Breast epithelium (tissue), 4 donors: ENCODE measurements at regions of chr5 and their contacts with region 1.

Region 1: GRCh38 chr5:111954516-111955395 is 197.8 kb upstream of the NREP start:
- DNase-seq: no peak
- H3K4me3 ChIP-seq: no peak overlapping the region
- H3K27ac ChIP-seq: no peak overlapping the region
- H3K4me1 ChIP-seq: no peaks in the 10 kb centered on the region
- H3K27me3 ChIP-seq: no peaks in the 10 kb centered on the region
- CTCF ChIP-seq: no peak
- POLR2A ChIP-seq: no peak

Region 2: GRCh38 chr5:111528056-111528455 is 426.7 kb before region 1 on chr5:
- intact Hi-C with region 1: no loop called
- DNase-seq: no peak
- H3K4me3 ChIP-seq: no peak overlapping the region
- H3K27ac ChIP-seq: no peak overlapping the region
- H3K4me1 ChIP-seq: no peaks in the 10 kb centered on the region
- H3K27me3 ChIP-seq: no peaks in the 10 kb centered on the region
- CTCF ChIP-seq: no peak
- POLR2A ChIP-seq: no peak

Region 3: DNA sequence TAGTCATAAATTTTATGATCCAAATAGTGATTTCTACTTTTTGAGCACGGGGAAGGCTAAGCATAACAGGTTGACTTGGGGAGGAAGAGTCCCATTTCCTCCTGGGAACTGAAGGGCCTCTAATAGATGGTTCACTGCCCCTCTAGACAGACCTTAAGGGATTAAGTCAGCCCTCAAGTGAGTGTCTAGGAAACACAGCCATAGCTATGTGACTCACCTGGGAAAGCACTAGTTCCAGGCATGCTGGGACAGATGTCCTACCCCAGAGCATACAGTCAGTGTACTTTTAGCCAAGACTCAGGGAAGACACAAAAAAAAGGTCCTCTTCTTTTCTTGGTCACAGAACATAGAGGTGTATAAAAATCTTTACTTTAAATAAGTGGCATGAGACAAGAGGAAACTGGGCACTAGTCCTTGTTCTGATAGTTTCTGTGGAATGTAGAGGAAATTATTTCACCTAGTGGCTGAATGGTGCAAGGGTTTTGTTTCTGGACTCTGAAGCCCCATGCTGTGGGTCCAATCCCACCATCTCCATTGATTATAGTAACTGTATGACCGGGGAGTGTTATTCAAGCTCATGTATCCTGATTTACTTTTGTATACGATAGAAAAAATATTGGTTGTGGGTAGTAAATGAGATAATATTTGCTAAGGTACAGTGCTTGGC is 283.8 kb before region 1 on chr5:
- intact Hi-C with region 1: no loop called
- DNase-seq: no peak
- H3K4me3 ChIP-seq: no peak overlapping the region
- H3K27ac ChIP-seq: no peak overlapping the region
- H3K4me1 ChIP-seq: no peaks in the 10 kb centered on the region
- H3K27me3 ChIP-seq: no peaks in the 10 kb centered on the region
- CTCF ChIP-seq: no peak
- POLR2A ChIP-seq: no peak

Region 4: GRCh38 chr5:112025757-112026156 is 71.0 kb after region 1 on chr5:
- intact Hi-C with region 1: no loop called
- DNase-seq: no peak
- H3K4me3 ChIP-seq: no peak overlapping the region
- H3K27ac ChIP-seq: no peak overlapping the region
- H3K4me1 ChIP-seq: no peaks in the 10 kb centered on the region
- H3K27me3 ChIP-seq: no peaks in the 10 kb centered on the region
- CTCF ChIP-seq: no peak
- POLR2A ChIP-seq: no peak

Region 5: DNA sequence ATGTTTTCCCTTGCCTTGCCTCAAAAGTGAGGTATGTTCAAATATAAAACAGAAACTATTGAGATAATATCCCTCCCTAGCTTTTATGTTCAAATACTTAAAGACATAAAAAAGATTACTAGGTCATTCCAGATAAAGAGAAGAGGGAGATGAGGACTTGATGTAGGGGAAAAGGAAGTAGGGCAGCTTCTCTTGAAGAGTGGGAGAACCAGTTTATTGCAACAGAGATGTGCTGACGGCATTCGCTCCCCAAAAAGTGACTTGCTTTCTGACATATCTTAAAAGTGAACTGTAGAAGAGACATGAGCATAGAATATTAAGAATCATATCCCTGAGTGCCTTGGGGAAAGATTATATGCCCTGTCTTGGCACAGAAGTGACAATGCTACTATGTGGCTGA is 132.5 kb after region 1 on chr5:
- intact Hi-C with region 1: no loop called
- DNase-seq: no peak
- H3K4me3 ChIP-seq: no peak overlapping the region
- H3K27ac ChIP-seq: no peak overlapping the region
- H3K4me1 ChIP-seq: no peaks in the 10 kb centered on the region
- H3K27me3 ChIP-seq: no peaks in the 10 kb centered on the region
- CTCF ChIP-seq: no peak
- POLR2A ChIP-seq: no peak

Region 6: GRCh38 chr5:113771483-113771882 is 1816.7 kb after region 1 on chr5:
- intact Hi-C with region 1: loop called (anchors 5 kb)
- DNase-seq: no peak
- H3K4me3 ChIP-seq: no peak overlapping the region
- H3K27ac ChIP-seq: no peak overlapping the region
- H3K4me1 ChIP-seq: no peaks in the 10 kb centered on the region
- H3K27me3 ChIP-seq: no peaks in the 10 kb centered on the region
- CTCF ChIP-seq: no peak
- POLR2A ChIP-seq: no peak